Calu3 (cell line): ENCODE measurements at regions of chr5 and their contacts with region 1.

Region 1: GRCh38 chr5:123423278-123424149 is at the start of gene CEP120:
- DNase-seq: peak; percentile 98
- H3K4me3 Mint-ChIP-seq: no peak within 1 kb of the TSS
- H3K27ac Mint-ChIP-seq: no peak within 1 kb of the TSS
- H3K4me1 Mint-ChIP-seq: peaks cover 22% of the 10 kb centered on the region
- H3K27me3 Mint-ChIP-seq: no peaks in the 10 kb centered on the region
- CTCF ChIP-seq: peak; percentile 80
- total RNA-seq, gene CEP120: 25.0 and 27.1 TPM in 2 replicates

Region 2: GRCh38 chr5:123511648-123512605 is 88.4 kb after region 1 on chr5 and contains the start of gene CSNK1G3:
- CTCF ChIA-PET with region 1: interaction called, 10 read pairs
- intact Hi-C with region 1: loop called (anchors 2 kb)
- DNase-seq: peak; percentile 96
- H3K4me3 Mint-ChIP-seq: peak within 1 kb of the TSS; percentile 89
- H3K27ac Mint-ChIP-seq: peak within 1 kb of the TSS; percentile 99
- H3K4me1 Mint-ChIP-seq: peaks cover 52% of the 10 kb centered on the region
- H3K27me3 Mint-ChIP-seq: no peaks in the 10 kb centered on the region
- CTCF ChIP-seq: no peak
- total RNA-seq, gene CSNK1G3: 48.2 and 57.5 TPM in 2 replicates